WTC11 (cell line): ENCODE measurements at regions of chr1 and their contacts with region 1.

Region 1: DNA sequence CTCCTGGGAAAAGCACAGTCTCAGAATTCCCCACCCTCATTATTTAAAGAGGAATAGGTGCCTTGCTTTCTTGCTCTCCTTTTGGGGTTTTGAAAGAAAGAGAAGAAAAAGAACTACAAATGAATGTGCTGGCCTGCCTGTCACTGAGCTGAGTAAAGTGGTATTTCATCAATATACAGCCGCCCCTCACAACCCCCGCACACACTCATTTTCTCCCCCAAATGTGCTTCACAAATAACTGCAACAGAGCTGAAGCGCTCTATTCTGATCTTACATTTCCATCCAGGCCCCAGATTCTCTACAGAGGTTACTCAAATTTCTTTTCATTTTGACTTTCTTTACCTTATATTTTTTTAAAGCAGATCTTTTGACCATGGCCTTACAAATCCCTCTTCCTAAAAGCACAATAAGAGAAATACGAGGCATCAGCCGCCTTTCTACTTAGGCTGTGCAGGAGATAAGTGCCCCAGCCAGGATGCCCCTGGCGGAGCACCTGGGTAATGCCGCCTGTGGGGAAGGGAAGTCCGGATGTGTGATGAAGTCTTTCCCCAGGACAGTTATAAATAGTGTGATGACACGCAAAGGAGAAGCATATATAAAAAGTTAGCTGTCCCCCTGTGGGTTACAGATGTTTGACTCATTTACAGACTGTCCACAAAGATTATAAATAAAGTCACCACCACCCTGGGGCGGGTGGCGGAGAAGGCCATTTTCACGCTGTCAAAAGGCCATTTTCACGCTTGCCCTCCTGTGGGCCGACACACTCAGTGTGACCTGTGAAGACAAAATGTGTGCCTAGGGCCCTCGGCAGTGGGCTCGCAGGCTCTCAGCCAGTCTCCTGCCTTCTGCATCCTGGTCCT is 6.5 kb downstream of the KCNN3 start:
- DNase-seq: peak; percentile 73
- ATAC-seq: peak; percentile 81
- H3K4me3 Mint-ChIP-seq: no peak overlapping the region
- H3K27ac Mint-ChIP-seq: no peak overlapping the region
- H3K4me1 Mint-ChIP-seq: peaks cover 55% of the 10 kb centered on the region
- H3K27me3 Mint-ChIP-seq: peaks cover 14% of the 10 kb centered on the region
- CTCF ChIP-seq: peak; percentile 81

Region 2: GRCh38 chr1:154765970-154766369 is 97.6 kb before region 1 on chr1:
- CTCF ChIA-PET with region 1: interaction called, 11 read pairs
- POLR2A ChIA-PET with region 1: no interaction called
- DNase-seq: peak; percentile 59
- ATAC-seq: peak; percentile 97
- H3K4me3 Mint-ChIP-seq: no peak overlapping the region
- H3K27ac Mint-ChIP-seq: no peak overlapping the region
- H3K4me1 Mint-ChIP-seq: no peaks in the 10 kb centered on the region
- H3K27me3 Mint-ChIP-seq: peaks cover 4% of the 10 kb centered on the region
- CTCF ChIP-seq: no peak

Region 3: DNA sequence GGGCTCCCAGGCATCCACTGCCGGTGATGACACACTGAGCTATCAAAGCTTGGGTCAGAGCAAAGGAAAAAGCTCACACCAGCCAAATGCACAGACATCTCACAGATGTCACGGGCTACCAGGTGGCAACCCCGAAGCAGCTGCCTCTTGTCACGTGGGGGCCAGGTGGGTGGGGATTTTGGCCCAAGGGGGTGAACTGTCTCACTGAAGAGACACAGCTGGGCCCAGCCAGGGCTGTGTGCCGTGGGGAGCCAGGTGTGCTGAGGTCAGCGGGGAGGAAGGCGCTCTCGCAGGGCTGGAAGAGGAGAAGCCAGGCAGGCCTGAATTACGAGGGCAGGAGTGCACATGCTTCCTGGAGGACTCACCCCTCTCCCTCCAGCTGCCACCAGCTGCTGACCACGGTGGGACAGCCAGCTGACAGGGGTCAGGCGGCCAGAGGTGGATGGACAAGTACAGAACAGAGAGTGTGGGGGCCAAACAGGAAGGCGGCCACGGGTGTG is 25.8 kb before region 1 on chr1:
- CTCF ChIA-PET with region 1: interaction called, 19 read pairs
- POLR2A ChIA-PET with region 1: no interaction called
- DNase-seq: no peak
- ATAC-seq: no peak
- H3K4me3 Mint-ChIP-seq: no peak overlapping the region
- H3K27ac Mint-ChIP-seq: no peak overlapping the region
- H3K4me1 Mint-ChIP-seq: peaks cover 19% of the 10 kb centered on the region
- H3K27me3 Mint-ChIP-seq: no peaks in the 10 kb centered on the region
- CTCF ChIP-seq: no peak

Region 4: DNA sequence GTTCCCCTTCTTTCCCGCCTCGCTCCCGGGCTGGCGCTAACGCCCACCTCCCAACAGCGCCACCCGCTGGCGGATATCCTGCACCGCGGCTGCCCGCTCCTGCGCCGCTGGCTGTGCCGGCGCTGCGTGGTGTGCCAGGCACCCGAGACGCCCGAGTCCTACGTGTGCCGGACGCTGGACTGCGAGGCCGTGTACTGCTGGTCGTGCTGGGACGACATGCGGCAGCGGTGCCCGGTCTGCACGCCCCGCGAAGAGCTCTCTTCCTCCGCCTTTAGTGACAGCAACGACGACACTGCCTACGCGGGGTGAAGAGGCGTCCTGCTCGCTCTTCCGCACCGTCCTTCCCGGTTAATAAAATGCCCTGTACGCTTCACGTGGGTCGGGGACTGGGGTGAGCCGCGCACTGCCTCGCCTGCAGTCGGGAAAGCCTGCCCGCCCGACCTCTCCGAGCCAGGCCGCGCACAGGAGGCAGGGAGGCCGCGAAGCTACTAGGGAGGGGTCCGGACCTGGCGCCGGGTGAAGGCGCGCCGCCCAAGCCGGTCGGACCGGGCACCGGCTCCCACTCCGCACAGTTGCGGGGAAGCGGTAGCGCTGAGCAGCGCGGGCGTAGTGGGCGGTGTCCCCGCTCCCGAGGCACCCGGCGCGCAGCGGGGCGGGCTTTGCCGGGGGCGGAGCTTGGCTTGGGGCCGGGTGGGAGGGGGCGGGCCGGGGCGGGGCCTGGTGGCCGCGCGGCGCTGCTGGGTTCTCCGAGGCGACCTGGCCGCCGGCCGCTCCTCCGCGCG is 187.2 kb after region 1 on chr1 and contains the start of gene ADAM15:
- CTCF ChIA-PET with region 1: no interaction called
- POLR2A ChIA-PET with region 1: no interaction called
- DNase-seq: peak; percentile 92
- ATAC-seq: peak; percentile 72
- H3K4me3 Mint-ChIP-seq: peak within 1 kb of the TSS; percentile 82
- H3K27ac Mint-ChIP-seq: peak within 1 kb of the TSS; percentile 72; the same call in 1 of the 2 replicates
- H3K4me1 Mint-ChIP-seq: peaks cover 33% of the 10 kb centered on the region
- H3K27me3 Mint-ChIP-seq: peaks cover 20% of the 10 kb centered on the region
- CTCF ChIP-seq: peak; percentile 97
- total RNA-seq, gene ADAM15: 32.1 to 38.4 TPM (median 33.2 TPM) in 3 replicates